GM12878 (cell line): ENCODE measurements at regions of chr12 and their contacts with region 1.

Region 1: GRCh38 chr12:50763639-50764285 is at the start of gene ATF1:
- DNase-seq: peak; percentile 73
- ATAC-seq: peak; percentile 85
- H3K4me3 ChIP-seq: peak within 1 kb of the TSS; percentile 96
- H3K27ac ChIP-seq: peak within 1 kb of the TSS; percentile 97
- H3K4me1 ChIP-seq: peaks cover 4% of the 10 kb centered on the region; the same call in 1 of the 2 replicates
- H3K27me3 ChIP-seq: no peaks in the 10 kb centered on the region
- CTCF ChIP-seq: no peak
- EP300 ChIP-seq: 0 out of 4 replicates have a peak, but pooled peaks of 1 of the 2 experiments have one; percentile 14
- POLR2A ChIP-seq: peak; percentile 95
- RAD21 ChIP-seq: no peak
- polyA plus RNA-seq, gene ATF1: 15.4 to 17.0 TPM

Region 2: DNA sequence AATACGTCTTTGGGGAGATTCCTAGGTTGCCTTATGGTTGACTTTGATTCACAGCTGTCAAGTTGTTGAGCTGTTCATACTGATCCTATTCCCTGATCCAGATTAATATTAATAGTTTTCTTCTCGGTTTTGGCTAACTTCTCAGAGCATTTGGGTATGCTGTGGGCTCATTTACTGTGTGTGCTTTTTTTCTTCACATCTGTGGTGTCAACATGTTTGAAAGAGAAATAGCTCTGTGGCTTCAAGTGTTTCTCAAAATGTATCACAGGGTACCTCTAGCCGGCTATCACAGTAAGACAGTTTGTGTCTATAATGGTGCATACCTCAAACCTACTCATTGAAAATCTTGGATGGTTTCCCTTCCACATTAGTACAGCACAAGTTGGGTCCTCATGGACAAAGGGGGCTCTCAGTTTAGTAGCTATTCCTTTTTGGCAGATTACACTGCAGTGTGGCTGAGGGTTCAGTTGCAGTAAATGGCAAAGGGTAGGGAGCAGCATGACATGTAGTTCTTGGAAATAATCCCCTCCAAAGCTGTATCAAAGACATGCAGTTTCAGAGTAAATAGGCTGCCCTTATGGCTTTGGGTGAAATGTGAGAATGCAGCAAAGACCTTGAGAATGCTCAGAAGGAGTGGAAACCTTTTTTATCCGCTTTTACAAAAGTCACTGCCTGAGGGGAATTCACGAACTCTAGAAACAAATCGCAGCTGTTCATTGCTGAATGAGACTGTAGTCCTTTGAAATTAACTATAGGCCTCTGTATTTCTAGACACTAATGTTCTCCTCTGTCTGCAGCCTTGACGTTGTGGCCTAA is 102.3 kb before region 1 on chr12:
- CTCF ChIA-PET with region 1: interaction called, 12 read pairs
- POLR2A ChIA-PET with region 1: interaction called, 3 read pairs
- RAD21 ChIA-PET with region 1: interaction called, 4 read pairs
- SMC1A ChIA-PET with region 1: interaction called, 5 read pairs
- in situ Hi-C with region 1: no loop called
- intact Hi-C with region 1: no loop called
- DNase-seq: peak; percentile 72
- ATAC-seq: peak; percentile 76
- H3K4me3 ChIP-seq: no peak overlapping the region
- H3K27ac ChIP-seq: peak overlapping the region; percentile 83
- H3K4me1 ChIP-seq: peaks cover 50% of the 10 kb centered on the region
- H3K27me3 ChIP-seq: no peaks in the 10 kb centered on the region
- CTCF ChIP-seq: no peak
- EP300 ChIP-seq: peak; percentile 40 to 55; a peak in 2 of 4 replicates
- POLR2A ChIP-seq: no peak
- RAD21 ChIP-seq: no peak

Region 3: DNA sequence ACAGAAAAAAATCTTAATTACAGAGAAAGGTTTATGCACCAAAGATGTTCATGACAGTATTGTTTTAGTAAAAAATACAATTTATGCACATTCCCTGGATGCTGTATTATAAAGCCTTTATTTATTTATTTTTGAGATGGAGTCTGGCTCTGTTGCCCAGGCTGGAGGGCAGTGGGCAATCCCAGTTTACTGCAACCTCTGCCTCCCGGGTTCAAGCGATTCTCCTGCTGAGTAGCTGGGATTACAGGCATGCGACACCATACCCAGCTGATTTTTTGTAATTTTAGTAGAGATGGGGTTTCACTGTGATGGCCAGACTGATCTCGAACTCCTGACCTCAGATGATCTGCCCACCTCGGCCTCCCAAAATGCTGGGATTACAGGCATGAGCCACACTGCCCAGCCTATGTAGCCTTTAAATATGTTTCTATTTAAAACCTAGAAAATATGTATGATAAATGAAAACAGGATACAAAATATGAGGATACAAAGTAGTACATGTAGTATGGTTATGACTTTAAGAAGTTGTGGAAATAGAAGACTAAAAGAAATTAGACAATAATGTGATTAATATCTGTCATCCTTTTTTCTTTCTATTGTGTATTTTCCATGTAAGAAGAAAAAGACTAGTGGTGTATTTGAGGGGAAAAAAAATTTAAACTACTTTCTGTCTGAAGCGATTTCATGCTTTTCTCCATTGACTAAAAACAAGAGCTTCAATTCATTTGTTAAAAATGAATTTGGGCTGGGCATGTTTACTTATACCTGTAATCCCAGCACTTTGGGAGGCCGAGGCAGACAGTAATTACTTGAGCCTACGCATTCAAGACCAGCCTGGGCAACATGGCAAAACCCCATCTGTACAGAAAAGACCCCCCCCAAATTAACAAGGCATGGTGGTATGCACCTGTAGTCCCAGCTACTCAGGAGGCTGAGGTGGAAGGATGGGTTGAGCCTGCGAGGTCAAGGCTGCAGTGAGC is 13.3 kb after region 1 on chr12:
- CTCF ChIA-PET with region 1: interaction called, 17 read pairs
- POLR2A ChIA-PET with region 1: interaction called, 6 read pairs
- RAD21 ChIA-PET with region 1: interaction called, 7 read pairs
- SMC1A ChIA-PET with region 1: interaction called, 7 read pairs
- in situ Hi-C with region 1: no loop called
- intact Hi-C with region 1: no loop called
- DNase-seq: no peak
- ATAC-seq: no peak; the same call in 2 of the 3 replicates
- H3K4me3 ChIP-seq: no peak overlapping the region
- H3K27ac ChIP-seq: no peak overlapping the region
- H3K4me1 ChIP-seq: no peaks in the 10 kb centered on the region
- H3K27me3 ChIP-seq: no peaks in the 10 kb centered on the region
- CTCF ChIP-seq: no peak
- EP300 ChIP-seq: no peak
- POLR2A ChIP-seq: no peak
- RAD21 ChIP-seq: no peak

Region 4: GRCh38 chr12:50986966-50987737 is 223.4 kb after region 1 on chr12:
- CTCF ChIA-PET with region 1: interaction called, 88 read pairs
- POLR2A ChIA-PET with region 1: interaction called, 9 read pairs
- RAD21 ChIA-PET with region 1: interaction called, 64 read pairs
- SMC1A ChIA-PET with region 1: interaction called, 75 read pairs
- in situ Hi-C with region 1: no loop called
- intact Hi-C with region 1: loop called (anchors 5 kb)
- DNase-seq: no peak
- ATAC-seq: peak; percentile 69
- H3K4me3 ChIP-seq: no peak overlapping the region
- H3K27ac ChIP-seq: no peak overlapping the region
- H3K4me1 ChIP-seq: peaks cover 17% of the 10 kb centered on the region
- H3K27me3 ChIP-seq: no peaks in the 10 kb centered on the region
- CTCF ChIP-seq: peak; percentile 45 to 68 (median 64); a peak in 5 of 6 replicates
- EP300 ChIP-seq: no peak
- POLR2A ChIP-seq: no peak
- RAD21 ChIP-seq: peak; percentile 77

Region 5: GRCh38 chr12:51025836-51026638 is 262.3 kb after region 1 on chr12 and contains the start of gene SLC11A2:
- CTCF ChIA-PET with region 1: interaction called, 34 read pairs
- POLR2A ChIA-PET with region 1: interaction called, 11 read pairs
- RAD21 ChIA-PET with region 1: interaction called, 16 read pairs
- SMC1A ChIA-PET with region 1: interaction called, 19 read pairs
- in situ Hi-C with region 1: no loop called
- intact Hi-C with region 1: loop called (anchors 5 kb)
- DNase-seq: peak; percentile 72
- ATAC-seq: peak; percentile 97
- H3K4me3 ChIP-seq: peak within 1 kb of the TSS; percentile 71
- H3K27ac ChIP-seq: peak within 1 kb of the TSS; percentile 74
- H3K4me1 ChIP-seq: peaks cover 14% of the 10 kb centered on the region; the same call in 1 of the 2 replicates
- H3K27me3 ChIP-seq: no peaks in the 10 kb centered on the region; a peak in 1 of 4 replicates
- CTCF ChIP-seq: peak; percentile 7 to 13 (median 12); a peak in 2 of 6 replicates
- EP300 ChIP-seq: no peak
- POLR2A ChIP-seq: peak; percentile 83
- RAD21 ChIP-seq: no peak
- polyA plus RNA-seq, gene SLC11A2: 6.2 to 9.0 TPM